ENCODE measurements at regions of chr14 and their contacts with region 1.

Region 1: GRCh38 chr14:76647697-76648298 is 113.5 kb upstream of the VASH1 start:
- DNase-seq: peak; percentile 10
- H3K4me3 Mint-ChIP-seq: no peak overlapping the region
- H3K27ac Mint-ChIP-seq: no peak overlapping the region
- H3K4me1 Mint-ChIP-seq: no peaks in the 10 kb centered on the region
- H3K27me3 Mint-ChIP-seq: peaks cover 3% of the 10 kb centered on the region

Region 2: DNA sequence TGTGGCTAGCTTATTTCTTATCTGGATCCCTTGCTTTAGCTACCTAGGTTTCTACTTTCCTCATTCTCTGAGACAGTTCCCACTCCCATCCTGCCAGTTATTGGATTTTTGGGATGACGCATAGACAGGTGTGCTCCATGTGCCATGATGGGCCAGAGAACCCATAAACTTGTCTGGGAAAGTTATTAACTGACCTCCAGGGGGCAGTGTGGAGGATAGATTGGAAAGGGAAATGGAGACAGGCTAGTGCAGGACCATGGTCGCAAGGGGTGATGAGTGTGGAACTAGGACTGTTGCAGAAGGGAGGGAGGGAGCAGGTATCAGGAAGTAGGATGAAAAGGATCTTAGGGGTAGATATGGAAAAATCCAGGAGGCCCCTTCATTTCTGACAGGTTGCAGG is 191.6 kb before region 1 on chr14:
- intact Hi-C with region 1: loop called (anchors 2 kb)
- DNase-seq: no peak
- H3K4me3 Mint-ChIP-seq: no peak overlapping the region
- H3K27ac Mint-ChIP-seq: no peak overlapping the region
- H3K4me1 Mint-ChIP-seq: no peaks in the 10 kb centered on the region
- H3K27me3 Mint-ChIP-seq: peaks cover 8% of the 10 kb centered on the region